CD4-positive, alpha-beta T cell (primary cell): ENCODE measurements at regions of chr1 and their contacts with region 1.

Region 1: DNA sequence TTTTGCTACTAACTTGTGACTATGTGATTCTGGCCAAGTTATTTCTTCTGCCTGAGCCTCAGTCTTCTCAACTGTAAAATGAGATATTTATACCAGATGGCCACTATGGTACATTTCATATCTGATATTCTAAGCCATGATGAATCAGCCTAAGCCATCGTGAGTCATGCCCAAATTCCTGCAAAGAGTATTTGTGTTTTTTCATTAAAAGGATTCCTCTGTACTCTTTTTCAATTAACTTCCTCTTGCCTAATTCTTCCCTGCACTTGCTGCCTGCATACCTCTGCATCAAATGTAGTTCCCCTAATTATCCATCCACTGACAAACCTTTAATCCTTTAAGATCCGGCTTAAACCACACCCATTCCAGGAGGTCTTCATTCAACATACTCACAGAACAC is 575.1 kb upstream of the BEND5 start:
- DNase-seq: no peak
- ATAC-seq: no peak
- H3K4me3 ChIP-seq: no peak overlapping the region
- H3K4me3 Mint-ChIP-seq: no peak overlapping the region
- H3K27ac ChIP-seq: no peak overlapping the region
- H3K27ac Mint-ChIP-seq: no peak overlapping the region
- H3K4me1 ChIP-seq: no peaks in the 10 kb centered on the region
- H3K4me1 Mint-ChIP-seq: no peaks in the 10 kb centered on the region
- H3K27me3 ChIP-seq: no peaks in the 10 kb centered on the region
- H3K27me3 Mint-ChIP-seq: no peaks in the 10 kb centered on the region
- CTCF ChIP-seq: no peak

Region 2: DNA sequence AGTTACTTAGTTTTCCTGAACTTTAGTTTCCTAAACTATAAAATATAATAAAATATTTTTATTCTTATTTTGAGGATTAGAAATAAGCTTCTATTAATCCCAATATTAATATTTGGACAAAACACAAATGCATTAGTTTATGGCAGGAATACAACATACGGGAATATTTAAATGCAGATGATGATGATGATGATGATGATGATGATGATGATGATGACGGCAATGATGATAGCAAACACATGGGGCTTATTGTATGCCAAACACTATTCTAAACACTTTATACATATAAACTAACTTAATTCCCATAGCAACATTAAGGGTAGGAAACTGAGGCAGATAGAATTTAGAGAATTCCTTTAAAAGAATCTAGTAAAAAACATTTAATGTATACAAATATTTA is 33.6 kb before region 1 on chr1:
- CTCF ChIA-PET with region 1: no interaction called
- POLR2A ChIA-PET with region 1: no interaction called
- intact Hi-C with region 1: loop called in 1 of 2 experiments (anchors 1 kb)
- DNase-seq: no peak
- ATAC-seq: no peak
- H3K4me3 ChIP-seq: no peak overlapping the region
- H3K4me3 Mint-ChIP-seq: no peak overlapping the region
- H3K27ac ChIP-seq: no peak overlapping the region
- H3K27ac Mint-ChIP-seq: no peak overlapping the region
- H3K4me1 ChIP-seq: no peaks in the 10 kb centered on the region
- H3K4me1 Mint-ChIP-seq: no peaks in the 10 kb centered on the region
- H3K27me3 ChIP-seq: no peaks in the 10 kb centered on the region
- H3K27me3 Mint-ChIP-seq: no peaks in the 10 kb centered on the region
- CTCF ChIP-seq: no peak